ENCODE measurements at regions of chr11 and their contacts with region 1.

Region 1: GRCh38 chr11:75706260-75706729 is 11.3 kb upstream of the MOGAT2 start:
- DNase-seq: peak; percentile 80 to 81
- ATAC-seq: peak; percentile 95 to 100
- H3K4me3 ChIP-seq: no peak overlapping the region
- H3K27ac ChIP-seq: no peak overlapping the region
- H3K4me1 ChIP-seq: no peaks in the 10 kb centered on the region
- CTCF ChIP-seq: peak; percentile 88
- EP300 ChIP-seq: no peak
- POLR2A ChIP-seq: no peak
- RAD21 ChIP-seq: peak; percentile 55 to 60

Region 2: GRCh38 chr11:75668451-75669297 is 37.6 kb before region 1 on chr11 and contains the start of gene MAP6:
- CTCF ChIA-PET with region 1: no interaction called
- POLR2A ChIA-PET with region 1: no interaction called
- DNase-seq: peak; percentile 21
- ATAC-seq: peak; percentile 27 to 66
- H3K4me3 ChIP-seq: peak within 1 kb of the TSS; percentile 63
- H3K27ac ChIP-seq: peak within 1 kb of the TSS; percentile 65 to 82; a peak in 5 of 6 replicates
- H3K4me1 ChIP-seq: no peaks in the 10 kb centered on the region
- CTCF ChIP-seq: no peak
- EP300 ChIP-seq: no peak
- POLR2A ChIP-seq: no peak
- RAD21 ChIP-seq: no peak
- polyA plus RNA-seq, gene MAP6: 2.1 and 2.9 TPM in 2 replicates

Region 3: GRCh38 chr11:75689863-75690609 is 16.3 kb before region 1 on chr11:
- CTCF ChIA-PET with region 1: interaction called, 15 read pairs
- POLR2A ChIA-PET with region 1: no interaction called
- DNase-seq: no peak
- ATAC-seq: no peak
- H3K4me3 ChIP-seq: no peak overlapping the region
- H3K27ac ChIP-seq: no peak overlapping the region
- H3K4me1 ChIP-seq: no peaks in the 10 kb centered on the region
- CTCF ChIP-seq: no peak
- EP300 ChIP-seq: no peak
- POLR2A ChIP-seq: no peak
- RAD21 ChIP-seq: no peak

Measured in A549 (cell line).